HepG2 (cell line): ENCODE measurements at regions of chr2 and their contacts with region 1.

Region 1: DNA sequence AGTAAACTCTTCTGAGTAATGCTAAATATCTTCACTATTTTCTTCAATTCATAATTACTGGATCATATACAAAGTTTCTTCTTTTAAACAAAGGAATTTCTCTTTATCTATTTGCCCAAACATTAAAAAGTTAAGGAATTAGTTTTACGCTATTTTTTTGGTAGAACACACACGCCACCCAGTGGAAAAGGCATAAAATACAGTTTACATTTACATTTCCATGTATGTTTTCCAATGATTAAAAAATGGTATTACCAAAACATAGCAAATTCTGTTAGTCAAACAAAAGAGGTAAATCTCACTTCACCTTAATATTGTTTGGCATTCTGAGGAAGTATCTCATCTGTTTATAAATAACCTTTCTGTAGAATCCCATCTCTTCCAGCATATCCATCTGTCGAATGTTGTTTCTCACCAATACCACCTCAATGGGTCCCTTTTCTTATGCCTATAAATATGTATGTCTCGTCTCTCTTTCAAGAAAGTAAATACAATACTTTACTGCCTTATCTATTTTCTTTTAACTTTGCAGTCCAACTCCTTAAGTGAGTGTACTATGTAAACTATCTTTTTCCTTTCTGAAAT is 7.2 kb downstream of the BOLL start:
- DNase-seq: peak; percentile 28
- ATAC-seq: no peak
- H3K4me3 ChIP-seq: no peak overlapping the region
- H3K27ac ChIP-seq: no peak overlapping the region
- H3K4me1 ChIP-seq: no peaks in the 10 kb centered on the region
- H3K27me3 ChIP-seq: no peaks in the 10 kb centered on the region
- CTCF ChIP-seq: peak; percentile 75
- EP300 ChIP-seq: no peak
- POLR2A ChIP-seq: no peak
- RAD21 ChIP-seq: peak; percentile 68

Region 2: GRCh38 chr2:197113275-197113711 is 664.6 kb before region 1 on chr2:
- CTCF ChIA-PET with region 1: interaction called, 4 read pairs
- POLR2A ChIA-PET with region 1: no interaction called
- in situ Hi-C with region 1: no loop called
- intact Hi-C with region 1: loop called (anchors 2 kb)
- DNase-seq: peak; percentile 12
- ATAC-seq: peak; percentile 53; the same call in 2 of the 3 replicates
- H3K4me3 ChIP-seq: no peak overlapping the region
- H3K27ac ChIP-seq: no peak overlapping the region
- H3K4me1 ChIP-seq: no peaks in the 10 kb centered on the region
- H3K27me3 ChIP-seq: peaks cover 0 to 4% of the 10 kb centered on the region in 2 experiments; a peak in 1 of 5 replicates
- CTCF ChIP-seq: peak; percentile 58
- EP300 ChIP-seq: no peak
- POLR2A ChIP-seq: no peak
- RAD21 ChIP-seq: peak; percentile 37; the same call in 1 of the 2 replicates

Region 3: GRCh38 chr2:197378494-197379307 is 399.2 kb before region 1 on chr2:
- CTCF ChIA-PET with region 1: no interaction called
- POLR2A ChIA-PET with region 1: no interaction called
- in situ Hi-C with region 1: loop called (anchors 10 kb)
- intact Hi-C with region 1: loop called (anchors 2 kb)
- DNase-seq: peak; percentile 54
- ATAC-seq: peak; percentile 83
- H3K4me3 ChIP-seq: peak overlapping the region in 1 of 3 experiments; percentile 36; a peak in 1 of 6 replicates
- H3K27ac ChIP-seq: no peak overlapping the region
- H3K4me1 ChIP-seq: 0 out of 2 replicates have a peak, but pooled peaks cover 6% of the 10 kb centered on the region
- H3K27me3 ChIP-seq: peaks cover 0 to 21% of the 10 kb centered on the region in 2 experiments; a peak in 2 of 5 replicates
- CTCF ChIP-seq: peak; percentile 87
- EP300 ChIP-seq: no peak
- POLR2A ChIP-seq: no peak
- RAD21 ChIP-seq: peak; percentile 83

Region 4: GRCh38 chr2:197399887-197400540 is 377.9 kb before region 1 on chr2:
- CTCF ChIA-PET with region 1: no interaction called
- POLR2A ChIA-PET with region 1: no interaction called
- in situ Hi-C with region 1: no loop called
- intact Hi-C with region 1: no loop called
- DNase-seq: no peak
- ATAC-seq: no peak
- H3K4me3 ChIP-seq: no peak overlapping the region
- H3K27ac ChIP-seq: no peak overlapping the region
- H3K4me1 ChIP-seq: no peaks in the 10 kb centered on the region
- H3K27me3 ChIP-seq: no peaks in the 10 kb centered on the region
- CTCF ChIP-seq: no peak
- EP300 ChIP-seq: no peak
- POLR2A ChIP-seq: no peak
- RAD21 ChIP-seq: no peak

Region 5: DNA sequence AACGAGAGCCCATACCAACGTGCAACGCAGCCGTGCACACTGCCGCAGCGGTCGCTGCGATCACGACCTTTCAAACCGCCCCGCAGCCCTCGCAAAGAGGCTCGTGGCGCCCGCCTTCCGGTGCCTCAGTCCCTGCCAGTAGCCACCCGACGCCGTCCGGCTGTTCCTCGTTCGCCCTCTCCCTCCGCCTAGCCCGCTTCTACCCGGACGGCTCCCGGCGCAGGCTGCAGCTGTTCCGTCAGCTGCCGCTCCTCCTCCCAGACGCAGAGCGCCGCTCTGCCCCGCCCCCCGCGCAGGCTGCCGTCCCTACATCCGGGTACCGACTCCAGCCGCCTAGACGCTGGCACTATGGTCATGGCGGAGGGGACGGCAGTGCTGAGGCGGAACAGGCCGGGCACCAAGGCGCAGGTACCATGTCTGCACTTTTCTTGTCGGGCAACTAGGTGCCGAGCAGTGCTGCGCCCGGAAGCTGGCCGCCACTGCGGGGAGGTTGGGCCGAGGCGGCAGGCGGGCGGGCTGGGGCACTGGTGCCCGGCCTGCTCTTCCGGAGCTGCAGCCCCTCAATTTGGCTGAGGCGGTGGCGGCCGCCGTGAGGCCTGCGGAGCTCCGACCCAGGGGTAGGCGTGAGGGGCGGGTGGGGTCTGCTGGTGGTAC is 262.0 kb before region 1 on chr2 and contains the start of gene MOB4:
- CTCF ChIA-PET with region 1: no interaction called
- POLR2A ChIA-PET with region 1: no interaction called
- in situ Hi-C with region 1: no loop called
- intact Hi-C with region 1: loop called (anchors 5 kb)
- DNase-seq: peak; percentile 93
- ATAC-seq: peak; percentile 96
- H3K4me3 ChIP-seq: peak within 1 kb of the TSS; percentile 89 to 98 (median 91)
- H3K27ac ChIP-seq: peak within 1 kb of the TSS; percentile 77
- H3K4me1 ChIP-seq: peaks cover 45% of the 10 kb centered on the region
- H3K27me3 ChIP-seq: no peaks in the 10 kb centered on the region; a peak in 1 of 5 replicates
- CTCF ChIP-seq: peak; percentile 53
- EP300 ChIP-seq: peak; percentile 88 to 100
- POLR2A ChIP-seq: peak; percentile 96 to 97
- RAD21 ChIP-seq: peak; percentile 81
- total RNA-seq, gene MOB4: 38.6 and 68.3 TPM in 2 replicates

Region 6: GRCh38 chr2:197705121-197705911 is 72.6 kb before region 1 on chr2 and contains the start of gene MARS2:
- CTCF ChIA-PET with region 1: interaction called, 20 read pairs
- POLR2A ChIA-PET with region 1: no interaction called
- in situ Hi-C with region 1: loop called (anchors 5 kb)
- intact Hi-C with region 1: loop called (anchors 1 kb)
- DNase-seq: peak; percentile 88
- ATAC-seq: peak; percentile 88
- H3K4me3 ChIP-seq: peak within 1 kb of the TSS; percentile 60 to 86 (median 85)
- H3K27ac ChIP-seq: peak within 1 kb of the TSS; percentile 54
- H3K4me1 ChIP-seq: peaks cover 30% of the 10 kb centered on the region
- H3K27me3 ChIP-seq: no peaks in the 10 kb centered on the region; a peak in 1 of 5 replicates
- CTCF ChIP-seq: peak; percentile 42
- EP300 ChIP-seq: no peak; a peak in 1 of 4 replicates
- POLR2A ChIP-seq: peak; percentile 93 to 97
- RAD21 ChIP-seq: peak; percentile 17; the same call in 1 of the 2 replicates
- total RNA-seq, gene MARS2: 16.2 and 19.5 TPM in 2 replicates